CD8-positive, alpha-beta T cell (primary cell): ENCODE measurements at regions of chr22 and their contacts with region 1.

Region 1: DNA sequence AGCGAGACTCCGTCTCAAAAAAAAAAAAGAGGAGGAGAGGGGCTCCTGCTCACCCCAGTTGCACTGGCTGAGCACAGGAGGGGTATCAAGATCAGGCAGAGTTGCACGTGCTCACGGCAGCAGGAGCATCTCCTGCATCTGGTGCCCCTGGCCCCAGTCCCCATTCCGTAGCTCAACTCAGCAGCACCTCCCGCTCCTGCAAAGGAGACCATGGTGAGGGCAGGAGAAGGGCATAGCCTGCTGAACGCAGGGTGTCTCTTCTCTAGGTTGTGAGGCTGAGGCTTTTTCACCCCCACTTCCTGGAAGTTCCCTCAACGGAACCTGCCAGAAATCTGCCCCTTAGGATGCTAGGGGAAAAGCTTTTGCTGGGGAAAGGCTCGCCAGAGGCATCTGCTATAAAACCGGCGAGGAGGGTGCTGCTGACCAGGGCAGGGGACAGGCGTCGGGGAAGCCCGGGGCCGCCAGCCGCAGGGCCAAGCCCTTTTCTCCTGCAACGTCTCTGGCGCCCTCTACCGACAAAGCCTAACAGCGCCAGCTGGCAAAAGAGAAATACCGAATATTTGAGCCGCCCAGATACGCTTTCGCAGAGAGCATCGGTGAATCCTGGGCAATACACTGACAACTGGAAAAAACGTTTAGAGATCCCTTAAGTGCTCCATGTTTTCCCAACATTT is 1.0 kb upstream of the PPP6R2 start:
- DNase-seq: peak; percentile 78 to 92 (median 88)
- ATAC-seq: peak; percentile 49
- H3K4me3 ChIP-seq: peak overlapping the region; percentile 59 to 60
- H3K4me3 Mint-ChIP-seq: peak overlapping the region; percentile 84
- H3K27ac ChIP-seq: peak overlapping the region; percentile 62 to 77
- H3K27ac Mint-ChIP-seq: peak overlapping the region; percentile 92
- H3K4me1 ChIP-seq: peaks cover 23% of the 10 kb centered on the region
- H3K4me1 Mint-ChIP-seq: peaks cover 12% of the 10 kb centered on the region
- H3K27me3 ChIP-seq: peaks cover 0 to 8% of the 10 kb centered on the region in 2 experiments
- H3K27me3 Mint-ChIP-seq: no peaks in the 10 kb centered on the region
- CTCF ChIP-seq: peak; percentile 88

Region 2: GRCh38 chr22:50148991-50149721 is 193.0 kb before region 1 on chr22:
- CTCF ChIA-PET with region 1: no interaction called
- POLR2A ChIA-PET with region 1: no interaction called
- intact Hi-C with region 1: loop called in 1 of 2 experiments (anchors 5 kb)
- DNase-seq: peak; percentile 59 to 87 (median 74)
- ATAC-seq: peak; percentile 99
- H3K4me3 ChIP-seq: no peak overlapping the region
- H3K4me3 Mint-ChIP-seq: no peak overlapping the region
- H3K27ac ChIP-seq: no peak overlapping the region
- H3K27ac Mint-ChIP-seq: no peak overlapping the region
- H3K4me1 ChIP-seq: no peaks in the 10 kb centered on the region
- H3K4me1 Mint-ChIP-seq: peaks cover 4% of the 10 kb centered on the region
- H3K27me3 ChIP-seq: no peaks in the 10 kb centered on the region
- H3K27me3 Mint-ChIP-seq: no peaks in the 10 kb centered on the region
- CTCF ChIP-seq: peak; percentile 82

Region 3: DNA sequence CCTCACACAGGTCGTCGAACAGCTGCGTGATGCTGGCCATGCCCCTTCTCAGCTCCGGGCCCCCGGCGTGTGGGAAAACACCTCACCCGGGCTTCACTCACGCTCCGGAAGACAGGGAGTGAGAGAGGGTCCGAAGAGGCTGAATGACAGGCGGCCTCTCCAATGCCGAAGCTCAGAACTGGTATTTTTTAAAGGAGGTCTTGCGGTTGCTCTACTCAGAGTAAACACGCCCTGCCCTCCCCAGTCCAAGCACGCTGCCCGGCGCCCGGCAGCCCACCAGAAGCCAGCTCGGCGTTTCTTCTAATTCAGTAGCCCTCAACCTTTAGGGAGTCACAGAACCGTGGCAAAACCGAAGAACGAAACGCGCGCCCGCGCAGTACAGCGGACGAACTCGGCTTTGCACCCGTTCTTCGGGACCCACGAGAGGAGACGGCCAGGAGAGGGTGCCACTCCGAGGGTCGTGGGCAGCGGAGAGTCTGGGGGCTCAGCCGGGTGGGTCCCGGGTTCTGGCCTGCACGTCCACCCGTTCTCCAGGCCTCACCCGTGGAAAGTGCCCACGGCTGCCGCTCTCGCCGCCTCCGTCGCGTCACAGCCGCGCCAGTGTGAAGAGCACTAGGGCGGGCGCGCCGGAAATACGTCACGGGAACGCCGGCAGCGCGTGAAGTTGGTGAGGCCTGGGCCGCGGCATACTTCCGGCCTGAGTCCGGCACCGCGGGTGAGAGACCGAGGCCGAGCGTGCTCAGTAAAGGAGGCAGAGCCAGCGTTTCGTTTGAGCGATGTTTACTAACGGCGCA is 97.5 kb before region 1 on chr22 and contains the start of gene TUBGCP6:
- CTCF ChIA-PET with region 1: interaction called, 7 read pairs
- POLR2A ChIA-PET with region 1: no interaction called
- intact Hi-C with region 1: loop called (anchors 1 kb)
- DNase-seq: peak; percentile 77 to 96 (median 91)
- ATAC-seq: peak; percentile 77
- H3K4me3 ChIP-seq: peak within 1 kb of the TSS; percentile 99
- H3K4me3 Mint-ChIP-seq: peak within 1 kb of the TSS; percentile 100
- H3K27ac ChIP-seq: peak within 1 kb of the TSS; percentile 94 to 99
- H3K27ac Mint-ChIP-seq: peak within 1 kb of the TSS; percentile 100
- H3K4me1 ChIP-seq: peaks cover 56% of the 10 kb centered on the region
- H3K4me1 Mint-ChIP-seq: peaks cover 51% of the 10 kb centered on the region
- H3K27me3 ChIP-seq: no peaks in the 10 kb centered on the region
- H3K27me3 Mint-ChIP-seq: no peaks in the 10 kb centered on the region
- CTCF ChIP-seq: peak; percentile 27
- total RNA-seq, gene TUBGCP6: 121 to 122 TPM

Region 4: DNA sequence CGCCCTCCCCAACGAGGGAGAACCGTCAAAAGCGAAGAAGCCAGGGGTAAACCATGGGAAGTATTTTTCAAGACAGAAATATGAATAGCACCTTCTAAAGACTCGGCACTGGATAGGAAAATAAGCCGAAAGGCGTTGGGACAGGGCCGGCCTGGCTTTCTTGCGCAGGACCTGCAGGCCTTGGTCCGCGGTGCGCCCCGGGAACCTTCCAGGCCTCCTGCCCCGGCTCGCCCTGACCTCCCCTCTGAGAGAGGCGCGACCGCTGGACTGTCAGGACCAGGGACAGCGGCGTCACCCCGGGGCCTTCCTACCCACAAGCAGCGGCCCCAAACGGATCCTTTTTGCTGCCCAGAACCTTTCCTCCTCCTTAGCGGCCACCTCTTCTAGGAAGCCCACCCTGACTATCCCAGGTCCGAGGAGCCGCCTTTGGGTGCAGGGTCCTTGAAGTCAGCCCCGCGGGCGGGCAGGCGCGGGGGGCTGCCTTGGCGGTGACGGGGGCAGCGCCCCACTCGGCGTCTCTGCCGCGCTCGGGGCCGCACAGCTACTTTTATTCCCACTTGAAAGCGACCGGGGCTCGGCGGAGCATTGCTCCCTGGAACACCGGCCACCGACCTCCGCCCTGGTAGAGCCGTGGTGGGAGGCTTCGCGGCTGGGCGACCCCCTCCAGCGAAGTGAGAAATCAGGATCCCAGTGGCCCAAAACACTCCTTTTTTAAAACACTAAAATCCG is 71.3 kb before region 1 on chr22:
- CTCF ChIA-PET with region 1: interaction called, 4 read pairs
- POLR2A ChIA-PET with region 1: no interaction called
- intact Hi-C with region 1: loop called (anchors 1 kb)
- DNase-seq: peak; percentile 49 to 82 (median 72)
- ATAC-seq: peak; percentile 64
- H3K4me3 ChIP-seq: peak overlapping the region; percentile 45 to 65
- H3K4me3 Mint-ChIP-seq: peak overlapping the region; percentile 69
- H3K27ac ChIP-seq: no peak overlapping the region
- H3K27ac Mint-ChIP-seq: no peak overlapping the region
- H3K4me1 ChIP-seq: peaks cover 25% of the 10 kb centered on the region
- H3K4me1 Mint-ChIP-seq: peaks cover 18% of the 10 kb centered on the region
- H3K27me3 ChIP-seq: peaks cover 0 to 2% of the 10 kb centered on the region in 2 experiments
- H3K27me3 Mint-ChIP-seq: peaks cover 3% of the 10 kb centered on the region
- CTCF ChIP-seq: no peak

Region 5: GRCh38 chr22:50326959-50327710 is 15.0 kb before region 1 on chr22 and contains the start of gene DENND6B:
- CTCF ChIA-PET with region 1: interaction called, 31 read pairs
- POLR2A ChIA-PET with region 1: interaction called, 4 read pairs
- intact Hi-C with region 1: no loop called
- DNase-seq: peak; percentile 34 to 85 (median 64)
- ATAC-seq: peak; percentile 94
- H3K4me3 ChIP-seq: peak within 1 kb of the TSS; percentile 45 to 69
- H3K4me3 Mint-ChIP-seq: peak within 1 kb of the TSS; percentile 83
- H3K27ac ChIP-seq: peak within 1 kb of the TSS; percentile 23 to 37
- H3K27ac Mint-ChIP-seq: peak within 1 kb of the TSS; percentile 84
- H3K4me1 ChIP-seq: peaks cover 10% of the 10 kb centered on the region
- H3K4me1 Mint-ChIP-seq: peaks cover 12% of the 10 kb centered on the region
- H3K27me3 ChIP-seq: no peaks in the 10 kb centered on the region
- H3K27me3 Mint-ChIP-seq: peaks cover 2% of the 10 kb centered on the region
- CTCF ChIP-seq: peak; percentile 65
- total RNA-seq, gene DENND6B: 3.0 to 3.1 TPM

Region 6: GRCh38 chr22:50474668-50475492 is 132.8 kb after region 1 on chr22 and contains the start of gene SBF1:
- CTCF ChIA-PET with region 1: no interaction called
- POLR2A ChIA-PET with region 1: no interaction called
- intact Hi-C with region 1: loop called (anchors 1 to 10 kb)
- DNase-seq: peak; percentile 78 to 94 (median 86)
- ATAC-seq: peak; percentile 65
- H3K4me3 ChIP-seq: peak within 1 kb of the TSS; percentile 63 to 82
- H3K4me3 Mint-ChIP-seq: peak within 1 kb of the TSS; percentile 94
- H3K27ac ChIP-seq: peak within 1 kb of the TSS; percentile 62 to 73
- H3K27ac Mint-ChIP-seq: peak within 1 kb of the TSS; percentile 96
- H3K4me1 ChIP-seq: peaks cover 46% of the 10 kb centered on the region
- H3K4me1 Mint-ChIP-seq: peaks cover 45% of the 10 kb centered on the region
- H3K27me3 ChIP-seq: no peaks in the 10 kb centered on the region
- H3K27me3 Mint-ChIP-seq: no peaks in the 10 kb centered on the region
- CTCF ChIP-seq: no peak
- total RNA-seq, gene SBF1: 209 to 215 TPM

Region 7: GRCh38 chr22:50627642-50628542 is 285.8 kb after region 1 on chr22 and contains the start of gene ARSA:
- CTCF ChIA-PET with region 1: no interaction called
- POLR2A ChIA-PET with region 1: no interaction called
- intact Hi-C with region 1: loop called (anchors 2 kb)
- DNase-seq: peak; percentile 53 to 93 (median 76)
- ATAC-seq: peak; percentile 90
- H3K4me3 ChIP-seq: peak within 1 kb of the TSS; percentile 78 to 91
- H3K4me3 Mint-ChIP-seq: peak within 1 kb of the TSS; percentile 91
- H3K27ac ChIP-seq: peak within 1 kb of the TSS; percentile 62 to 82
- H3K27ac Mint-ChIP-seq: peak within 1 kb of the TSS; percentile 95
- H3K4me1 ChIP-seq: peaks cover 25% of the 10 kb centered on the region
- H3K4me1 Mint-ChIP-seq: peaks cover 20% of the 10 kb centered on the region
- H3K27me3 ChIP-seq: no peaks in the 10 kb centered on the region
- H3K27me3 Mint-ChIP-seq: no peaks in the 10 kb centered on the region
- CTCF ChIP-seq: no peak
- total RNA-seq, gene ARSA: 37.1 to 43.4 TPM